Prostate gland (tissue), 2 donors: ENCODE measurements at regions of chr3 and their contacts with region 1.

Region 1: GRCh38 chr3:27312044-27312668 is 57.0 kb downstream of the NEK10 start:
- DNase-seq: peak; percentile 34
- H3K4me3 ChIP-seq: no peak overlapping the region
- H3K27ac ChIP-seq: no peak overlapping the region
- H3K4me1 ChIP-seq: no peaks in the 10 kb centered on the region
- H3K27me3 ChIP-seq: no peaks in the 10 kb centered on the region
- CTCF ChIP-seq: peak; percentile 55 to 89 (median 82)
- POLR2A ChIP-seq: no peak

Region 2: DNA sequence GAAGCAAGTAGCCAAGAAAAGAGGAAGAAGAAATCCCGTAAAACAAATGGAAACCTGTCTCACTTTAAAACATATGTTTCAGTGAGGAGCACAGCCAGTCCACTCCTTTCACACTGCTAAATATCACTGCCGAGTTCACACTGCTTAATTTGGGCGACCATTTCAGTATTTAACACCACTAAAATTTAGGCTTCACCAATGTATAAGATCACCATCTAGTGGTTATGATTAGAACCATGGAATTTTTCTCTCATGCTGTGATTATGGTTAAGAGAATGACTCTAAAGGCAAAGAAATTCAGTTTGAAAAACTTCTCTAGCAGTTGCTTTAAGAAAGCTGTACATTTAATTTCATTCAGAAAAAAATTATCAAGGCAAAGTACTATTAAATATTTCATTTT is 155.4 kb after region 1 on chr3:
- intact Hi-C with region 1: loop called (anchors 5 kb)
- DNase-seq: no peak
- H3K4me3 ChIP-seq: no peak overlapping the region
- H3K27ac ChIP-seq: no peak overlapping the region
- H3K4me1 ChIP-seq: no peaks in the 10 kb centered on the region
- H3K27me3 ChIP-seq: no peaks in the 10 kb centered on the region
- CTCF ChIP-seq: peak; percentile 19 to 66 (median 61)
- POLR2A ChIP-seq: no peak

Region 3: GRCh38 chr3:27681245-27681748 is 369.1 kb after region 1 on chr3:
- intact Hi-C with region 1: loop called (anchors 5 kb)
- DNase-seq: peak; percentile 24
- H3K4me3 ChIP-seq: no peak overlapping the region
- H3K27ac ChIP-seq: peak overlapping the region; percentile 60 to 63
- H3K4me1 ChIP-seq: no peaks in the 10 kb centered on the region
- H3K27me3 ChIP-seq: no peaks in the 10 kb centered on the region
- CTCF ChIP-seq: peak; percentile 58 to 74 (median 68)
- POLR2A ChIP-seq: no peak